ENCODE measurements at regions of chr2 and their contacts with region 1.

Region 1: DNA sequence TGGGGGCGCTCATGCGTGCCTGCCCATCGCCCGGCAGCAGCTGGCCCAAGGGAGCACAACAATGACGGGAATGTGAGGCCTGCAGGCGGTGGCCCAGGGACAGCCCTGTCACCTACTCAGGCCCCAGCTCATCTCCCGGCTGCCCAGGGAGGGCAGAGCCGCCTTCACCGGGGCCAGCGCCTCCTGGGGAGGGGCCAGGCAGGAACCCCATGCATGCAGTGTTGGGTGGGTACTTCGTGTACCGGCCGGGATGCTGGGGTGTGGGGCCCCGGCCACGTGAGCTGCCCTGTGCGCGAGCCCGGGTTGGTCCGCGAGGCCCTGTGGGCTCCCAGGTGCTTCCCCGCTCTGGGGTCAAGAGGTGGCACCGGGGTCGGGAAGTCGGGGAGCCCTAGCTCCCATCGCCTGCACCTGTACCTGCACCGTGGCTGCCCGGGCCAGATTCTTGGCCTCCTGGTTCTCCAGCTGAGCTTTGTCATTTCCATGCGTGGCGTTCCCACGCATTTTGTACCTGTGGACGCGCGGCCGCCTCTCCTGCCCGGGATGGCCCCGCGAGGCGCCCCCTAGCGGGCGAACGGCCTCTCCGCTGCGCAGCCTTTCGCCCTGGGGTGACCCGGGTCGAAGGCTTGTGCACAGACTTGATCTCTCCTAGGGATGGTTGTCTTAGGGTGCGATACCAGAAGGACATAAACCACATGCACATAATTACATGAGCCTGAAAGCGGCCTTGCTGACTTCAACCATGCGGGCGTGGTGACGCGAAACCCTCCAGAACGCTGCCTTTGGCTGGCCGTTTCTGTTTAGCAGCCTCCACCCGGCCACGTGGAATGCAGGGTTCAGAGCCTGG is 950 bp downstream of the KLHL30 start:
- DNase-seq: peak; percentile 38 to 65
- ATAC-seq: peak; percentile 3
- H3K4me3 ChIP-seq: peak overlapping the region; percentile 56 to 89 (median 80)
- H3K27ac ChIP-seq: peak overlapping the region; percentile 91 to 100 (median 98)
- H3K4me1 ChIP-seq: peaks cover 67 to 72% of the 10 kb centered on the region in 2 donors
- H3K27me3 ChIP-seq: no peaks in the 10 kb centered on the region
- CTCF ChIP-seq: peak; percentile 51 to 96 (median 89)
- POLR2A ChIP-seq: no peak

Region 2: DNA sequence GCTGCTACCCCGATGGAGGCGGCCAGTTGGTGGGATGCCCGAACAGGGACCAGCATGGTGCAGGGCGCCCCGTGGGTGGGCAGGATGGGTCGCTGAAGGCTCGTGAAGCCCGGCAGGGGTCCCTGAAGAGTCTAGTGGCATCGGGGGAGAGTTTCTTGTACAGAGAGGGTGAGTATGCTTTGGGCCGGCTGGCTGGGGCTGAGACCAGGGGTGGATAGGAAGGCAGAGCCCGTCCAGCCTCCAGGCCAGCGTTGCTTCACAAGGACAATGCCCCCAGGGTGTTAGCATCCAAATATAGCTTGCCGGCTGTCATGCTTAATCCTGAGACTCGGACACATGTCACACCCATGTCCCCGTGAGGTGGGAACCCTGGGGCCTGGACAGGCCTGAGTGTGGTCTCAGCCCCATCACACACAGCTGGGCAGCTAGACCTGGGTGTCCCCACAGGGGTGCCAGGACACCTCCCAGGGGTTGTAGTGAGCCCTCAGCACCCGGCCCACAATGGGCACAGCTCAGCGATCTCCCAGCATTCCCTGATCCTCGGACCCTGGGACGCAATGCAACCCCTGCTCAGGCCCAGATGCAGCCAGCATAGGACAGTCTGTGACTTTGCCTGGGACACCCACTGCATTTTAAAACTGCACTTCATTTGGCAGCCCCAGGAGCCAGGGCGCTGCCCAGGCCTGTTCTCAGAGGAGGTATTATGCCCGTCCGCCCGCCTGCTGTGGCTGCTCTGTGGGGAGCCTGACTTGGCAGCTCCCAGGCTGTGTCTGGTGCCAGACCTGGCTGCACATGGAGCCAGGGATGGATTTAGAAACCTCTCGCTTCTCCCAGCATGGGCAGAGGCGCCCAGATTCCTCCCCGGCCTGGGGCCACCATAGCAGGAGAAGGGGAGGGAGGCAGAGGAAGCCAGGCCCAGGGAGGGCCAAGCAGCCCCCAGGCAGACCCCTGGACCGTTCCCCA is 243.6 kb before region 1 on chr2:
- in situ Hi-C with region 1: no loop called
- intact Hi-C with region 1: loop called (anchors 2 kb)
- DNase-seq: peak; percentile 88 to 95
- ATAC-seq: peak; percentile 81 to 85
- H3K4me3 ChIP-seq: peak overlapping the region in 1 of 4 donors; percentile 8
- H3K27ac ChIP-seq: peak overlapping the region; percentile 98 to 99 (median 98)
- H3K4me1 ChIP-seq: peaks cover 53 to 66% of the 10 kb centered on the region in 2 donors
- H3K27me3 ChIP-seq: no peaks in the 10 kb centered on the region
- CTCF ChIP-seq: no peak
- POLR2A ChIP-seq: peak; percentile 58 to 71

Region 3: GRCh38 chr2:238158527-238159070 is 19.2 kb after region 1 on chr2 and contains the start of gene ERFE:
- in situ Hi-C with region 1: no loop called
- intact Hi-C with region 1: no loop called
- DNase-seq: peak in 1 of 2 donors; percentile 44
- ATAC-seq: peak; percentile 35 to 43
- H3K4me3 ChIP-seq: peak within 1 kb of the TSS; percentile 5 to 36 (median 22)
- H3K27ac ChIP-seq: peak within 1 kb of the TSS in 1 of 4 donors; percentile 29
- H3K4me1 ChIP-seq: peaks cover 18 to 20% of the 10 kb centered on the region in 2 donors
- H3K27me3 ChIP-seq: peaks cover 8 to 16% (median 14%) of the 10 kb centered on the region in 3 donors
- CTCF ChIP-seq: peak in 2 of 5 experiments; percentile 58 to 69
- POLR2A ChIP-seq: peak in 1 of 2 donors; percentile 5
- total RNA-seq, gene ERFE: 0.46 to 3.3 (median 1.3) TPM

Region 4: GRCh38 chr2:238231251-238231793 is 91.9 kb after region 1 on chr2:
- in situ Hi-C with region 1: no loop called
- intact Hi-C with region 1: loop called (anchors 5 kb)
- DNase-seq: peak; percentile 72 to 85
- ATAC-seq: peak; percentile 89 to 91
- H3K4me3 ChIP-seq: peak overlapping the region; percentile 52 to 77 (median 62)
- H3K27ac ChIP-seq: peak overlapping the region; percentile 57 to 81 (median 67)
- H3K4me1 ChIP-seq: peaks cover 3 to 14% of the 10 kb centered on the region in 2 donors
- H3K27me3 ChIP-seq: no peaks in the 10 kb centered on the region
- CTCF ChIP-seq: peak in 1 of 5 experiments; percentile 40
- POLR2A ChIP-seq: peak; percentile 44 to 66